OCI-LY7 (cell line): ENCODE measurements at regions of chr3 and their contacts with region 1.

Region 1: DNA sequence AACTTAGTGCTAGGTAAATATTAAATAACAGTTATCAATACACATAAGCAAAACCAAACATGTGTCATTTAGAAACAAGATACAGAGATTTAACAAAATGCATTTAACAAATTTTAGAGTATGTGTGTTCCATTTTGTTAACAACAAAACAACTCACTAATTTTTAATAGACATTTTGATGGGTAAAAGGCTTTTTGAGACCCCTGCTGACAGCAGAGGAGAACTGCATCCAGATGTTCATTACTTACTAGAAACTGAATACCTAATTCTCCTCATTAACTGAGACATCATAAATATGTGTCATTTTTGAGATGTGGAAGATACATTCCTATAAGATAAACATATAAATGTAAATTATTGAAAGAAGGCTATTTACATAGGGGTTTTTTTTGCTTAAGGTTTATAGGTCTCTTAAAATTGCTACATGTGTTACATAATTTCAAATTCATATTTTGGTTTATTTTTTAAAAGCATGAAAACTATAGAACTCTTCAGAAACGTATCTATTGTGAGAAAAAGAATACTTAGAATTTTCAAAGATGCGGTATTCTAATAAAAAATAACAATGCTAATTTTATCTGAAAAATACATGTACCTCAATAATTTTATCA is 1009.8 kb downstream of the TUSC7 start:
- DNase-seq: peak; percentile 57
- H3K4me3 ChIP-seq: peak overlapping the region; percentile 9
- H3K27ac ChIP-seq: peak overlapping the region; percentile 78
- H3K4me1 ChIP-seq: peaks cover 56% of the 10 kb centered on the region
- CTCF ChIP-seq: peak; percentile 93

Region 2: GRCh38 chr3:116886202-116886893 is 833.1 kb before region 1 on chr3:
- CTCF ChIA-PET with region 1: no interaction called
- POLR2A ChIA-PET with region 1: no interaction called
- intact Hi-C with region 1: loop called (anchors 10 kb)
- DNase-seq: peak; percentile 56
- H3K4me3 ChIP-seq: peak overlapping the region; percentile 52
- H3K27ac ChIP-seq: peak overlapping the region; percentile 84
- H3K4me1 ChIP-seq: peaks cover 25% of the 10 kb centered on the region
- CTCF ChIP-seq: no peak

Region 3: GRCh38 chr3:117526470-117527079 is 192.8 kb before region 1 on chr3:
- CTCF ChIA-PET with region 1: no interaction called
- POLR2A ChIA-PET with region 1: interaction called, 5 read pairs
- intact Hi-C with region 1: loop called (anchors 5 kb)
- DNase-seq: peak; percentile 22
- H3K4me3 ChIP-seq: no peak overlapping the region
- H3K27ac ChIP-seq: no peak overlapping the region
- H3K4me1 ChIP-seq: no peaks in the 10 kb centered on the region
- CTCF ChIP-seq: peak; percentile 85

Region 4: GRCh38 chr3:117597865-117598264 is 121.6 kb before region 1 on chr3:
- CTCF ChIA-PET with region 1: no interaction called
- POLR2A ChIA-PET with region 1: interaction called, 8 read pairs
- intact Hi-C with region 1: loop called (anchors 1 kb)
- DNase-seq: no peak
- H3K4me3 ChIP-seq: no peak overlapping the region
- H3K27ac ChIP-seq: no peak overlapping the region
- H3K4me1 ChIP-seq: peaks cover 21% of the 10 kb centered on the region
- CTCF ChIP-seq: no peak

Region 5: GRCh38 chr3:117735481-117736101 is 16.2 kb after region 1 on chr3:
- CTCF ChIA-PET with region 1: no interaction called
- POLR2A ChIA-PET with region 1: interaction called, 12 read pairs
- intact Hi-C with region 1: no loop called
- DNase-seq: no peak
- H3K4me3 ChIP-seq: no peak overlapping the region
- H3K27ac ChIP-seq: no peak overlapping the region
- H3K4me1 ChIP-seq: no peaks in the 10 kb centered on the region
- CTCF ChIP-seq: no peak

Region 6: GRCh38 chr3:117977504-117978228 is 258.2 kb after region 1 on chr3:
- CTCF ChIA-PET with region 1: interaction called, 3 read pairs
- POLR2A ChIA-PET with region 1: interaction called, 4 read pairs
- intact Hi-C with region 1: loop called (anchors 5 kb)
- DNase-seq: no peak
- H3K4me3 ChIP-seq: no peak overlapping the region
- H3K27ac ChIP-seq: no peak overlapping the region
- H3K4me1 ChIP-seq: peaks cover 38% of the 10 kb centered on the region
- CTCF ChIP-seq: no peak